ENCODE measurements at regions of chr15 and their contacts with region 1.

Region 1: GRCh38 chr15:34587717-34588674 is 4.5 kb upstream of the GOLGA8B start:
- DNase-seq: peak; percentile 37 to 82 (median 55)
- ATAC-seq: peak; percentile 59
- H3K4me3 ChIP-seq: peak overlapping the region; percentile 16
- H3K4me3 Mint-ChIP-seq: peak overlapping the region; percentile 77
- H3K27ac ChIP-seq: no peak overlapping the region
- H3K27ac Mint-ChIP-seq: no peak overlapping the region
- H3K4me1 ChIP-seq: peaks cover 11% of the 10 kb centered on the region
- H3K4me1 Mint-ChIP-seq: peaks cover 9% of the 10 kb centered on the region
- H3K27me3 ChIP-seq: no peaks in the 10 kb centered on the region
- H3K27me3 Mint-ChIP-seq: peaks cover 19% of the 10 kb centered on the region
- CTCF ChIP-seq: peak; percentile 93

Region 2: GRCh38 chr15:34101366-34102175 is 486.4 kb before region 1 on chr15 and contains the starts of genes EMC7 and PGBD4:
- CTCF ChIA-PET with region 1: no interaction called
- POLR2A ChIA-PET with region 1: interaction called, 8 read pairs
- intact Hi-C with region 1: loop called in 1 of 2 experiments (anchors 5 kb)
- DNase-seq: peak; percentile 97 to 100 (median 99)
- ATAC-seq: peak; percentile 96
- H3K4me3 ChIP-seq: peak within 1 kb of the TSS; percentile 80
- H3K4me3 Mint-ChIP-seq: peak within 1 kb of the TSS; percentile 91
- H3K27ac ChIP-seq: peak within 1 kb of the TSS; percentile 86 to 97
- H3K27ac Mint-ChIP-seq: peak within 1 kb of the TSS; percentile 96
- H3K4me1 ChIP-seq: peaks cover 20% of the 10 kb centered on the region
- H3K4me1 Mint-ChIP-seq: peaks cover 54% of the 10 kb centered on the region
- H3K27me3 ChIP-seq: no peaks in the 10 kb centered on the region
- H3K27me3 Mint-ChIP-seq: no peaks in the 10 kb centered on the region
- CTCF ChIP-seq: no peak
- total RNA-seq, gene EMC7: 54.0 to 54.6 TPM
- total RNA-seq, gene PGBD4: 2.3 to 2.6 TPM

Region 3: GRCh38 chr15:34223904-34224596 is 363.9 kb before region 1 on chr15:
- CTCF ChIA-PET with region 1: no interaction called
- POLR2A ChIA-PET with region 1: no interaction called
- intact Hi-C with region 1: loop called in 1 of 2 experiments (anchors 5 kb)
- DNase-seq: peak in 2 of 14 experiments; percentile 6 to 21
- ATAC-seq: no peak
- H3K4me3 ChIP-seq: peak overlapping the region; percentile 68
- H3K4me3 Mint-ChIP-seq: peak overlapping the region; percentile 97
- H3K27ac ChIP-seq: peak overlapping the region in 1 of 2 donors; percentile 81
- H3K27ac Mint-ChIP-seq: peak overlapping the region; percentile 99
- H3K4me1 ChIP-seq: peaks cover 20% of the 10 kb centered on the region
- H3K4me1 Mint-ChIP-seq: peaks cover 23% of the 10 kb centered on the region
- H3K27me3 ChIP-seq: no peaks in the 10 kb centered on the region
- H3K27me3 Mint-ChIP-seq: peaks cover 5% of the 10 kb centered on the region
- CTCF ChIP-seq: no peak

Region 4: DNA sequence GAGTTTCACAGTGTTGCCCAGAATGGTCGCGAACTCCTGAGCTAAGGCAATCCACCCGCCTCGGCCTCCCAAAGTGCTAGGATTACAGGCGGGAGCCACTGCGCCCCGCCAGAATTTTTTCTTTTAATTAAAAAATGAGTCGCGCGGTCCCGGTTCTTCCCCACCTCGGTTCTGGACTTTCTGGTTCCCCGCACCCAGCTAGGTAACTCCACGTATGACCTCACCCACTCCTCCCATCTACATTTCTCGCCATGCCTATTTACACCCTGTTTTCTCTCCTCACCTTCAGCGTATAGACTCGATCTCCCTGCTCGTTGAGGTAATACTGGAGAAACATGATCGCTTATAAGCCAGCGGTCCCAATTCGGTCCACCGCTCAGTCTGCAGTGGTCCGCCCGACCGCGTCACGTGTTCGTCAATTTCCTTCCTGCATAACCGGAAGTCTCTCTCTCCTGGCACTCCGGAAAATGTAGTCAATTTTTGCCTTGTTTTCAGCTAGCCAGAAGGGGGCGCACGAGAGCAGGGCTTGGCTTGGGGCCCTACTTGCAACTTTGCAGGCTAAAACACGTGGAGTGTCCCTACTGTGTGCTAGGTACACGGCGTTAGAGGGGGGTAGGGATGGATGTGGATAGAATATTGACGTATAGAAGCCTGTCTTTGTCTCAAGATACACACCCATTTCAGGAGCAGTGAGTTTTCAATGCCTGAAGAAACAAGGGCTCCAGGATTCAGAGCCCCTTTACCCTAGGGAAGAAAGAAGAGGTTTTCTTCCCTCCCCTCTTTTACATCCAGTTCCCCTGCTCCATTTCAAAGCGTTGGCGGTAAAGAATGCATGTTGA is 245.0 kb before region 1 on chr15 and contains the starts of genes NOP10 and NUTM1:
- CTCF ChIA-PET with region 1: no interaction called
- POLR2A ChIA-PET with region 1: interaction called, 4 read pairs
- intact Hi-C with region 1: loop called (anchors 1 to 2 kb)
- DNase-seq: peak; percentile 86 to 96 (median 92)
- ATAC-seq: peak; percentile 85
- H3K4me3 ChIP-seq: peak within 1 kb of the TSS; percentile 89
- H3K4me3 Mint-ChIP-seq: peak within 1 kb of the TSS; percentile 88
- H3K27ac ChIP-seq: peak within 1 kb of the TSS; percentile 85 to 87
- H3K27ac Mint-ChIP-seq: peak within 1 kb of the TSS; percentile 84
- H3K4me1 ChIP-seq: peaks cover 23% of the 10 kb centered on the region
- H3K4me1 Mint-ChIP-seq: peaks cover 17% of the 10 kb centered on the region
- H3K27me3 ChIP-seq: no peaks in the 10 kb centered on the region
- H3K27me3 Mint-ChIP-seq: no peaks in the 10 kb centered on the region
- CTCF ChIP-seq: peak; percentile 94
- total RNA-seq, gene NOP10: 44.4 to 44.8 TPM
- total RNA-seq, gene NUTM1: not detected

Region 5: DNA sequence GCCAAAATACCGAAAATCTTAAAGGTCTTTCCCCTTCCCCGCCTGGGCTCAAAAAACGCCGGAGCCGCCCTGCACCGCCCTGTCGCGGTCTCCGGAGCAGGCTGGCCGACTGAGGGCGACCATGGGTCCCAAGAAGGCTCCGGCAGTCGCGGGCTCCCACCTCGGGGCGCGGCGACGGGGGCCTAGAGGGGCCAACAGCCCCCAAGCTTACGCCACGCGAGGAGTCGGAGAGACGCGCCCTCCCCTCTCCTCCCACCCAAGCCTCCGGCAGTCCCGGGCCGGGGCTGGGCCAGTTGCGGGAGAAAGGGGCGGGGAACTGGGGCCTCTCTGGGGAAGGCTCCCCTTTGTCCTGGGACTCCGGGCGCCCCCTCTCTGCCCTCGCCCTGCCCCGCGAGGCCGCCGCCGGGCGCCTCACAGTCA is 73.7 kb before region 1 on chr15:
- CTCF ChIA-PET with region 1: no interaction called
- POLR2A ChIA-PET with region 1: no interaction called
- intact Hi-C with region 1: loop called in 1 of 2 experiments (anchors 5 kb)
- DNase-seq: peak in 3 of 14 experiments; percentile 4 to 36 (median 13)
- ATAC-seq: peak; percentile 51
- H3K4me3 ChIP-seq: peak overlapping the region; percentile 46
- H3K4me3 Mint-ChIP-seq: peak overlapping the region; percentile 68
- H3K27ac ChIP-seq: no peak overlapping the region
- H3K27ac Mint-ChIP-seq: no peak overlapping the region
- H3K4me1 ChIP-seq: peaks cover 23% of the 10 kb centered on the region
- H3K4me1 Mint-ChIP-seq: peaks cover 20% of the 10 kb centered on the region
- H3K27me3 ChIP-seq: peaks cover 8 to 56% of the 10 kb centered on the region in 2 experiments
- H3K27me3 Mint-ChIP-seq: peaks cover 78% of the 10 kb centered on the region
- CTCF ChIP-seq: no peak